ENCODE measurements at regions of chr17 and their contacts with region 1.

Region 1: DNA sequence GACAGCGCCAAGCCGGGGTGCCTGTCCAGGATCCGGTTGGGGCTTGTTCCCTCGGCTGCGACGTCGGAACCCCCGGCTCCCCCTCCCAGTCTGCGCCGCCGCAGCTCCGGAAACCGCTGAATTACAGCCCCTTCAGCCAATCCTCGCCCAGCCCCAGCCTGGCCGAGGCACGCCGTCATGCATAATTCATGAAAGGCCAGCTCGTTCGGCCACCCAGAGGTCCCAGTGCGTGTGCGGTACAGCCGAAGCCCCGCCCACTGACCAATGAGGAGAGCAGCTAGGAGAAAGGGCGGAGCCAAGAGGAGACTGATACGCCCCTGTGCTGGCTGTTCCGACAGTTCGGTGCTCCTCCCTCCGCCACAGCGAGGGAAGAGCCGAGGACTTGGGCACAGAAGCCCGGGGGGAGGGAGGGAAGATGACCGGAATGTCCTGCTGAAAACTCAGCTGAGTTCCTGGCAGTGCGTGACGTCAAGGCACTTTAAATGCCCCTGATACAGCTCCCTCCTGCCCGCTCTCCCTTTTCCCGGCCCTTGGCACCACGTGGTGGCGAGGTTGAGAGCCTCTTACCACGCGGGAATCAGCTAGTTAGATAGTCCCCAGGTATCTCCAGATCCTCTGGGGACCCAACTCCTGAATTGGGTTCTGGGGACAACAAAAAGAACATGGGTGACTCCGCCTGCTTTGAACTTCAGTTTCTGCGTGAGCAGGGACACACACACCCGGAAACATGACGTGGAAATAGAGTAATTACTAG is at the start of gene STAT3:
- DNase-seq: peak; percentile 100
- ATAC-seq: peak; percentile 97
- H3K4me3 ChIP-seq: peak within 1 kb of the TSS; percentile 99
- H3K27ac ChIP-seq: peak within 1 kb of the TSS; percentile 92
- H3K4me1 ChIP-seq: peaks cover 6% of the 10 kb centered on the region
- H3K27me3 ChIP-seq: no peaks in the 10 kb centered on the region
- CTCF ChIP-seq: no peak; the same call in 1 of the 2 replicates
- POLR2A ChIP-seq: peak; percentile 79
- RAD21 ChIP-seq: peak; percentile 26; the same call in 1 of the 2 replicates
- total RNA-seq, gene STAT3: 61.9 and 66.3 TPM in 2 replicates

Region 2: GRCh38 chr17:42422958-42423712 is 34.6 kb after region 1 on chr17 and contains the start of gene CAVIN1:
- CTCF ChIA-PET with region 1: interaction called, 3 read pairs
- POLR2A ChIA-PET with region 1: no interaction called
- dilution Hi-C with region 1: no loop called
- in situ Hi-C with region 1: no loop called
- intact Hi-C with region 1: loop called (anchors 1 kb)
- DNase-seq: peak; percentile 98
- ATAC-seq: peak; percentile 80
- H3K4me3 ChIP-seq: peak within 1 kb of the TSS; percentile 92
- H3K27ac ChIP-seq: peak within 1 kb of the TSS; percentile 97
- H3K4me1 ChIP-seq: peaks cover 23% of the 10 kb centered on the region
- H3K27me3 ChIP-seq: no peaks in the 10 kb centered on the region
- CTCF ChIP-seq: 0 out of 2 replicates have a peak, but pooled peaks have one; percentile 8
- POLR2A ChIP-seq: peak; percentile 99
- RAD21 ChIP-seq: no peak; the same call in none of the 2 replicates
- total RNA-seq, gene CAVIN1: 556 and 644 TPM in 2 replicates

Measured in IMR-90 (cell line).